ENCODE measurements at regions of chr10 and their contacts with region 1.

Region 1: GRCh38 chr10:27030060-27030459 is 70.2 kb downstream of the ANKRD26 start:
- DNase-seq: no peak
- ATAC-seq: no peak
- H3K4me3 ChIP-seq: no peak overlapping the region
- H3K27ac ChIP-seq: no peak overlapping the region
- H3K4me1 ChIP-seq: no peaks in the 10 kb centered on the region
- H3K27me3 ChIP-seq: no peaks in the 10 kb centered on the region
- CTCF ChIP-seq: no peak
- EP300 ChIP-seq: no peak
- POLR2A ChIP-seq: no peak
- RAD21 ChIP-seq: no peak

Region 2: DNA sequence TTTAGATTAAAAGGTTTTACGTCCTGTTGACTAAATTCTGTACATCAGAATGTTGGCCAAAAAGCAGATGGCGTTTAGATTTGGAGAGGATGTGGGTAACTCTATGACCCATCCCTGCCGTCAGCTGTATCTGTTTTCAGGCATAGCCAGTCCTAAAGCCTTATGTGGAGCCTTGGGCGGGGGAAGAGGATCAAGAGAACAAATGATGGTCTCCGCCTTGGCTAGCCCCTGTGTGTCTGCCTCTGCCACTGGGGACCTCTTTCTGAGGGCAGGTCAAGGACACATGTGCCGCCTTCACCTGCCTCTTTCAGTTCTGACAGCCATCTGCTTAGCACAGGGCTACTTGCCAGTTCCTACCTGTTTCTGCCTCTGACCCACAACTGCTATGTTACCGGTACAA is 308.5 kb before region 1 on chr10:
- CTCF ChIA-PET with region 1: no interaction called
- POLR2A ChIA-PET with region 1: no interaction called
- in situ Hi-C with region 1: no loop called
- intact Hi-C with region 1: no loop called
- DNase-seq: no peak
- ATAC-seq: no peak
- H3K4me3 ChIP-seq: no peak overlapping the region
- H3K27ac ChIP-seq: no peak overlapping the region
- H3K4me1 ChIP-seq: no peaks in the 10 kb centered on the region
- H3K27me3 ChIP-seq: no peaks in the 10 kb centered on the region; a peak in 1 of 5 replicates
- CTCF ChIP-seq: no peak
- EP300 ChIP-seq: no peak
- POLR2A ChIP-seq: no peak
- RAD21 ChIP-seq: no peak

Region 3: GRCh38 chr10:27041196-27041595 is 11.1 kb after region 1 on chr10:
- CTCF ChIA-PET with region 1: no interaction called
- POLR2A ChIA-PET with region 1: interaction called, 10 read pairs
- in situ Hi-C with region 1: no loop called
- intact Hi-C with region 1: no loop called
- DNase-seq: no peak
- ATAC-seq: no peak
- H3K4me3 ChIP-seq: no peak overlapping the region
- H3K27ac ChIP-seq: no peak overlapping the region
- H3K4me1 ChIP-seq: no peaks in the 10 kb centered on the region
- H3K27me3 ChIP-seq: no peaks in the 10 kb centered on the region; a peak in 1 of 5 replicates
- CTCF ChIP-seq: no peak
- EP300 ChIP-seq: no peak
- POLR2A ChIP-seq: no peak
- RAD21 ChIP-seq: no peak